Uterus (tissue), 4 donors: ENCODE measurements at regions of chr17 and their contacts with region 1.

Region 1: GRCh38 chr17:29640413-29640812 is 17.7 kb upstream of the CORO6 start:
- DNase-seq: no peak
- H3K4me3 ChIP-seq: no peak overlapping the region
- H3K27ac ChIP-seq: peak overlapping the region; percentile 69 to 80
- H3K4me1 ChIP-seq: peaks cover 6 to 9% of the 10 kb centered on the region in 2 donors
- H3K27me3 ChIP-seq: no peaks in the 10 kb centered on the region
- CTCF ChIP-seq: no peak
- POLR2A ChIP-seq: no peak

Region 2: DNA sequence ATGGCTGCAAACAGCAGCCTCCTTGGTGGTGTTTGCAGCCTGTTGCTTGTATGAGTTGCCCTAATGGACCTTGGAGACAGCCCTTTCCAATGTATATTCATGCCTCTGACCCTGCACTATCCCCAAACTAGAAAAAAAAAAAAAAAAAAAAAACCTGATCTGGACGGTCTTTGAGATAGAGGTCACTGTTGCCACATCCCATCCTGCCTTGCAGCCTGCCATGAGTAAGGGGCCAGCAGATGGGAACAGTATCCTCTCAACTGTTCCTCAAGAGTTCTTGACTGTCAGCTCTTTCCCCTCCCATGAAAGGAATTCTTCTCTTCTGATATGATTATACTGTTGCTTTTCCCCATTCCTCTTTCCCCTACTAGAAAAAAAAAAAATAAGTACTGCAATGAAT is 137.2 kb after region 1 on chr17:
- intact Hi-C with region 1: loop called (anchors 5 kb)
- DNase-seq: no peak
- H3K4me3 ChIP-seq: no peak overlapping the region
- H3K27ac ChIP-seq: no peak overlapping the region
- H3K4me1 ChIP-seq: no peaks in the 10 kb centered on the region
- H3K27me3 ChIP-seq: no peaks in the 10 kb centered on the region
- CTCF ChIP-seq: no peak
- POLR2A ChIP-seq: no peak